ENCODE measurements at regions of chr17 and their contacts with region 1.

Region 1: DNA sequence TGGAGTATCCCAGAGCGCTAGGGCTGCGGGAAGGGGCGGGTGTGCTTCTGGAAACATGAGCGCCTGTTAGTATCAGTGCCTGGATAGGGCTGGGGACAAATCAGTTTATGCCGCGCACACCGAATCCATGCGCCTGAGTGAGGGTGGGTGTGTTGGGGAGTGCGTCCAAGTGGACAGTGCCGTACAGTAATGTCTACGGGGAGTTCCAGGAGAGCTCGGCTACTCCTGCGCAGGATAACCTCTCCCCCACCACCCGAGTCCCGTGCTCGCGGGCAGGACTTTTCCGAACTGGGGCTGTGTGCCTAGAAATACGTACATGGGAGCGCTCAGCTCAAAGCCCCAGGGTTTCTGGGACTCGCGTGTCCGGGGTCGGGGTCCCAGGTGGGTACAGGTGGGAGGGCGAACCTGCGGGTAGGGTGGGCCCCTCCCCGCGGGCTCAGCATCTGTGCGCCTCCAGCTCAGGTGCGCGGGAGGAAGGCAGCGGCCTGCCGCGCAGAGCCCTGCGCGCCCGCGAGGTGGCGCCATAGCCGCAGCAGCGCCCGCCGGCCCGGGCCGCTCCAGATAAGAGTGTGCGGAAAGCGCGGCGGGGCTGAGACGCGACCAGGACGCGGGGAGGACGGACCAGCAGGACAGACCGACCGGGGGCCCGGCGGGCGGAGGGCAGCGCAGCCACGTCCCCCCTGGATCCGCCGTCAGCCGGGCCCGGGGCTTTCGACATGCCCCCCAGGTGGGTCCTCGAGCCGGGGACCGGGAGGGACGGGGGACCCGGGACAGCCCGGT is at the start of gene HIC1:
- DNase-seq: peak; percentile 52 to 63
- ATAC-seq: peak; percentile 53 to 63
- H3K4me3 ChIP-seq: peak within 1 kb of the TSS; percentile 52 to 67 (median 64)
- H3K27ac ChIP-seq: peak within 1 kb of the TSS; percentile 70 to 82 (median 76)
- H3K4me1 ChIP-seq: peaks cover 0 to 28% of the 10 kb centered on the region in 2 donors
- H3K27me3 ChIP-seq: peaks cover 0 to 14% (median 0%) of the 10 kb centered on the region in 3 donors
- CTCF ChIP-seq: peak; percentile 78 to 99 (median 98)
- POLR2A ChIP-seq: peak; percentile 55 to 71
- total RNA-seq, gene HIC1: 4.6 to 9.6 (median 6.9) TPM

Region 2: GRCh38 chr17:1203111-1203966 is 851.4 kb before region 1 on chr17:
- in situ Hi-C with region 1: no loop called
- intact Hi-C with region 1: no loop called
- DNase-seq: peak; percentile 35 to 39
- ATAC-seq: peak; percentile 41 to 73
- H3K4me3 ChIP-seq: peak overlapping the region; percentile 55 to 82 (median 62)
- H3K27ac ChIP-seq: peak overlapping the region; percentile 59 to 76 (median 66)
- H3K4me1 ChIP-seq: no peaks in the 10 kb centered on the region
- H3K27me3 ChIP-seq: peaks cover 0 to 9% (median 6%) of the 10 kb centered on the region in 3 donors
- CTCF ChIP-seq: peak in 1 of 5 experiments; percentile 26
- POLR2A ChIP-seq: no peak

Region 3: GRCh38 chr17:1813088-1813487 is 241.6 kb before region 1 on chr17:
- in situ Hi-C with region 1: no loop called
- intact Hi-C with region 1: no loop called
- DNase-seq: no peak
- ATAC-seq: no peak
- H3K4me3 ChIP-seq: no peak overlapping the region
- H3K27ac ChIP-seq: peak overlapping the region; percentile 81 to 84 (median 82)
- H3K4me1 ChIP-seq: peaks cover 7 to 12% of the 10 kb centered on the region in 2 donors
- H3K27me3 ChIP-seq: no peaks in the 10 kb centered on the region
- CTCF ChIP-seq: no peak
- POLR2A ChIP-seq: no peak

Region 4: DNA sequence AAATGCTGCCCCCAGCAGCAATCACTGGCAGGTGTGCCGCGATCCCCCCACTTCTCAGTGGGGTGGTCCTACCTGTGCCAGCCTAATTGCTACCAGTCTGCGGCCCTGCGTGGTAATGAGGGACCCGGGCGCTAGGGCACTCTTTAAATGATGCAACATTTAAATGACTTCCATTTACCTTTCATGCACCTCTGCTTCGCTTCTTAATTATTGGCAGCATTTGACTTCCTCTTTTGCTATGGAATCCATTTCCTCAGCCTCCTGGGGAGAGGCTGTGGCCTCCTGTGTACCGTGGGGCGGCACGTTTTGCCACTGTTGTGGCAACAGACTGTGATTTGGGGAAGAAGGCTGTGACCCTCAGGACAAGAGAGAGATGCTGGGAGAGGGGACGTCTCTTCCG is 138.8 kb before region 1 on chr17:
- in situ Hi-C with region 1: no loop called
- intact Hi-C with region 1: no loop called
- DNase-seq: no peak
- ATAC-seq: no peak
- H3K4me3 ChIP-seq: no peak overlapping the region
- H3K27ac ChIP-seq: no peak overlapping the region
- H3K4me1 ChIP-seq: peaks cover 3 to 5% of the 10 kb centered on the region in 2 donors
- H3K27me3 ChIP-seq: peaks cover 3 to 6% (median 5%) of the 10 kb centered on the region in 3 donors
- CTCF ChIP-seq: no peak
- POLR2A ChIP-seq: no peak

Region 5: GRCh38 chr17:2094891-2095535 is 40.3 kb after region 1 on chr17:
- in situ Hi-C with region 1: no loop called
- intact Hi-C with region 1: loop called (anchors 5 kb)
- DNase-seq: peak in 1 of 2 donors; percentile 44
- ATAC-seq: peak; percentile 54 to 61
- H3K4me3 ChIP-seq: no peak overlapping the region
- H3K27ac ChIP-seq: peak overlapping the region; percentile 38 to 54 (median 38)
- H3K4me1 ChIP-seq: peaks cover 17 to 21% of the 10 kb centered on the region in 2 donors
- H3K27me3 ChIP-seq: no peaks in the 10 kb centered on the region
- CTCF ChIP-seq: peak; percentile 35 to 63 (median 53)
- POLR2A ChIP-seq: no peak

Region 6: GRCh38 chr17:2179615-2180295 is 125.1 kb after region 1 on chr17:
- in situ Hi-C with region 1: no loop called
- intact Hi-C with region 1: loop called (anchors 2 kb)
- DNase-seq: peak; percentile 63 to 84
- ATAC-seq: peak; percentile 73 to 82
- H3K4me3 ChIP-seq: peak overlapping the region in 1 of 4 donors; percentile 27
- H3K27ac ChIP-seq: peak overlapping the region; percentile 39 to 81 (median 66)
- H3K4me1 ChIP-seq: peaks cover 73 to 74% of the 10 kb centered on the region in 2 donors
- H3K27me3 ChIP-seq: no peaks in the 10 kb centered on the region
- CTCF ChIP-seq: no peak
- POLR2A ChIP-seq: no peak

Region 7: GRCh38 chr17:2336215-2336851 is 281.6 kb after region 1 on chr17 and contains the start of gene TSR1:
- in situ Hi-C with region 1: no loop called
- intact Hi-C with region 1: loop called (anchors 5 kb)
- DNase-seq: peak; percentile 86 to 89
- ATAC-seq: peak; percentile 85 to 88
- H3K4me3 ChIP-seq: peak within 1 kb of the TSS; percentile 71 to 90 (median 82)
- H3K27ac ChIP-seq: peak within 1 kb of the TSS; percentile 87 to 94 (median 92)
- H3K4me1 ChIP-seq: peaks cover 14 to 27% of the 10 kb centered on the region in 2 donors
- H3K27me3 ChIP-seq: no peaks in the 10 kb centered on the region
- CTCF ChIP-seq: peak in 2 of 5 experiments; percentile 35
- POLR2A ChIP-seq: peak; percentile 91
- total RNA-seq, gene TSR1: 76.7 to 94.1 (median 84.7) TPM

Measured in gastrocnemius medialis (tissue), 4 donors.